Activated naive CD4-positive, alpha-beta T cell treated with anti-CD3 and anti-CD28 coated beads for 36 hours (primary cell): ENCODE measurements at regions of chr3 and their contacts with region 1.

Region 1: GRCh38 chr3:71039332-71039731 is 544.2 kb downstream of the FOXP1 start:
- DNase-seq: peak; percentile 48
- H3K4me3 Mint-ChIP-seq: peak overlapping the region; percentile 45
- H3K27ac Mint-ChIP-seq: peak overlapping the region; percentile 61
- H3K4me1 Mint-ChIP-seq: peaks cover 83% of the 10 kb centered on the region
- H3K27me3 Mint-ChIP-seq: no peaks in the 10 kb centered on the region

Region 2: GRCh38 chr3:71050538-71051258 is 11.4 kb after region 1 on chr3:
- CTCF ChIA-PET with region 1: interaction called, 4 read pairs
- intact Hi-C with region 1: loop called (anchors 1 kb)
- DNase-seq: peak; percentile 77
- H3K4me3 Mint-ChIP-seq: peak overlapping the region; percentile 6
- H3K27ac Mint-ChIP-seq: peak overlapping the region; percentile 92
- H3K4me1 Mint-ChIP-seq: peaks cover 100% of the 10 kb centered on the region
- H3K27me3 Mint-ChIP-seq: no peaks in the 10 kb centered on the region

Region 3: DNA sequence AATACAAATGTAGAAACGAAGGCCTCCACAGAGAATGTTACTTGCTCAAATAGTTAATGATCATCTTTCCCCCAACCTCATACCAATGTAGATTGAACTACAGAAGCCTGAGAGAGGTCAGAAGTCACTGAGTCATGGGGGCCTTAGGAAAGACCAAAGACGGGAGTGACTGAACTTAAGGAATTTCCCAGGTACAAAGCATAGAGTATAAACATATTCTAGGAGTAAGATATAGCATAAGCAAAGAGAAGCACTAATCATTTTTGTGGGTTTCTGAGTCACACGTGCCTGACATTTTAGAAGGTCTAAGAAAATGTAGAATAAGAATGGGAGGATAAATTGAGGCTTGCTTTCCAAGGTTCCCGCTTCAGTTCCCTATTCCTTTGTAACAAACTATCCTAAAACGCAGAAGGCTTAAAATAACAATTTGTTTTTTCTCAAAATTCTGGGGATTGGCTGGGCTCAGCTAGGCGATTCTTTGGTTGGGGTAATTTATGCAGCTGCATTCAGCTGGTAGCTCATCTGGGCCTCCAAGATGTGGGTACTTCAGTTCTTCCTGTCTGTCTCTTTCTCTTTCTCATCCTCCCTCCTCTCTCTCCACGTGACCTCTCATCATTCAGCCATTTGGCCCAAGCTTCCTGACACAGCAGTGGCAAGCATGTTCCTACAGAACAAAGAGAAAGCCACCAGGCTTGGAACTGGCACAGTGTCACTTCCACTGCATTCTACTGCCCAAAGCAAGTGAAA is 121.6 kb after region 1 on chr3:
- CTCF ChIA-PET with region 1: no interaction called
- intact Hi-C with region 1: no loop called
- DNase-seq: peak; percentile 44
- H3K4me3 Mint-ChIP-seq: peak overlapping the region; percentile 33
- H3K27ac Mint-ChIP-seq: peak overlapping the region; percentile 88
- H3K4me1 Mint-ChIP-seq: peaks cover 79% of the 10 kb centered on the region
- H3K27me3 Mint-ChIP-seq: no peaks in the 10 kb centered on the region

Region 4: GRCh38 chr3:72255791-72256559 is 1216.6 kb after region 1 on chr3:
- CTCF ChIA-PET with region 1: no interaction called
- intact Hi-C with region 1: no loop called
- DNase-seq: peak; percentile 61
- H3K4me3 Mint-ChIP-seq: no peak overlapping the region
- H3K27ac Mint-ChIP-seq: no peak overlapping the region
- H3K4me1 Mint-ChIP-seq: peaks cover 51% of the 10 kb centered on the region
- H3K27me3 Mint-ChIP-seq: no peaks in the 10 kb centered on the region